ENCODE measurements at regions of chr6 and their contacts with region 1.

Region 1: DNA sequence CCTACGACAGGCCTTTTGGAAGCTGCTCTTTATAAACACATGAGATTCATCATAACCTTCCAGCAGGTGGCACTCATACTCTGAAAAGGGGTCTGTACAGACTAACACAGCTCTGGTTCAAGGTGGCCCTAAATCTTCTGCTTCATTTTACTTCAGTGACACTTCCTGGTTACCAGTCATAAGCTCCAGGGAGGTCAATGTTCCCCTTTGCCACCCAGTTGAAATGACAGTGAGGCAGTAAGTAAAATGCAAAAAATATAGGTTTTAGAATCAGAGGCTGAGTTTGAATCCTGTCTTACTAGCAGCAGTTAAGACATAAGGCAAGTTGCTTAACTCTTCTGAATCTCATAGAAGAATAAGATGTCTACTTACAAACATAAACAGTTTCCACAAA is 132.8 kb downstream of the CDK19 start:
- DNase-seq: peak in 1 of 2 donors; percentile 85
- ATAC-seq: peak; percentile 91 to 98 (median 96)
- H3K4me3 ChIP-seq: no peak overlapping the region
- H3K27ac ChIP-seq: peak overlapping the region in 5 of 10 donors; percentile 27 to 61 (median 57)
- H3K4me1 ChIP-seq: peaks cover 0 to 30% (median 17%) of the 10 kb centered on the region in 9 donors
- H3K27me3 ChIP-seq: no peaks in the 10 kb centered on the region
- CTCF ChIP-seq: peak; percentile 64 to 84 (median 78)

Region 2: GRCh38 chr6:110528101-110528929 is 154.1 kb before region 1 on chr6:
- intact Hi-C with region 1: loop called in 7 of 10 experiments (anchors 5 to 10 kb)
- DNase-seq: peak in 1 of 2 donors; percentile 51
- ATAC-seq: peak; percentile 48 to 89 (median 84)
- H3K4me3 ChIP-seq: no peak overlapping the region
- H3K27ac ChIP-seq: peak overlapping the region in 7 of 10 donors; percentile 8 to 52 (median 38)
- H3K4me1 ChIP-seq: peaks cover 0 to 19% (median 6%) of the 10 kb centered on the region in 9 donors
- H3K27me3 ChIP-seq: no peaks in the 10 kb centered on the region
- CTCF ChIP-seq: peak; percentile 72 to 88 (median 81)

Region 3: DNA sequence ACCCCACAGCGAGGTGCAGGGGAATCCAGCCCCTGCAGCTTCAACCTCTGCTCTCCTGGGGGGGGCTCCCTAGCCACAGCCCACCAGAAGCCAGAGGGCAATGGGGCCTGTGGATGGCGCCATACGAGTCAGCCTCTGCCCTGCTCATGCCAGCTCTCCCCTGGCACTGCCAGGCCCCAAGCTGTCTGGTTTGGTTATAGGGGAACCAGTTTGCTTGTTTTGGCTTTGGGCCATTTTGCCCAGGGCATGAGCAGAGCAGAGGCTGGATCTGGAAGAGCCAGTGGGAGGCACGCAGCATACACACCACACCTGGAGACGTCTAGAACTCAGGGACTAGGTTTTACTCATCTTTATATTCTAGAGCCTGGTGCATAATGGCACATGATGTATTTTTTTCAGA is 139.4 kb before region 1 on chr6:
- intact Hi-C with region 1: loop called in 3 of 10 experiments (anchors 5 to 10 kb)
- DNase-seq: peak in 1 of 2 donors; percentile 15
- ATAC-seq: peak; percentile 26 to 63 (median 44)
- H3K4me3 ChIP-seq: no peak overlapping the region
- H3K27ac ChIP-seq: peak overlapping the region; percentile 37 to 90 (median 88)
- H3K4me1 ChIP-seq: peaks cover 9 to 37% (median 20%) of the 10 kb centered on the region in 9 donors
- H3K27me3 ChIP-seq: no peaks in the 10 kb centered on the region
- CTCF ChIP-seq: no peak

Region 4: DNA sequence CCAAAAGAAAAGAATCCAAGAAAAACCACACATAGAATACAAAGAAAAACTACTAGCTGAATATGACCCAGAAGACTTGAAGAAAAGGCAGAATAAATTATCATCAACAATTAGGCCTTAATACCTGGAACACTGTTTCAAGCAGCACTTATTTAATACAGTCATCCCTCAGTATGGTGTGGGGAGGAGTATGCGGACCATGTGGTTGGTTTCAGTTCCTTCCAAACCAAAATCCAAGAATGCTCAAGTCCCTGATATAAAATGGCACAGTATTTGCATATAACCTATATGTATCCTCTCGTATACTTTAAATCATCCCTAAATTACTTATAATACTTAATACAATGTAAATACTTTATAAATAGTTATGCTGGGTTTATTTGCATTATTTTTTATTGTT is 116.7 kb after region 1 on chr6:
- intact Hi-C with region 1: no loop called
- DNase-seq: no peak
- ATAC-seq: no peak
- H3K4me3 ChIP-seq: no peak overlapping the region
- H3K27ac ChIP-seq: no peak overlapping the region
- H3K4me1 ChIP-seq: peaks cover 0 to 4% (median 0%) of the 10 kb centered on the region in 9 donors
- H3K27me3 ChIP-seq: no peaks in the 10 kb centered on the region
- CTCF ChIP-seq: no peak

Region 5: GRCh38 chr6:110873981-110874879 is 191.8 kb after region 1 on chr6 and contains the start of gene AMD1:
- intact Hi-C with region 1: loop called in 8 of 10 experiments (anchors 1 to 10 kb)
- DNase-seq: peak; percentile 97 to 99
- ATAC-seq: peak; percentile 89 to 97 (median 94)
- H3K4me3 ChIP-seq: peak within 1 kb of the TSS; percentile 68 to 96 (median 91)
- H3K27ac ChIP-seq: peak within 1 kb of the TSS; percentile 84 to 97 (median 95)
- H3K4me1 ChIP-seq: peaks cover 0 to 42% (median 30%) of the 10 kb centered on the region in 9 donors
- H3K27me3 ChIP-seq: no peaks in the 10 kb centered on the region
- CTCF ChIP-seq: no peak
- total RNA-seq, gene AMD1: 38.0 to 101 (median 55.3) TPM

Region 6: GRCh38 chr6:110949679-110950285 is 267.3 kb after region 1 on chr6:
- intact Hi-C with region 1: loop called (anchors 1 to 5 kb)
- DNase-seq: no peak
- ATAC-seq: peak in 1 of 8 donors; percentile 19
- H3K4me3 ChIP-seq: no peak overlapping the region
- H3K27ac ChIP-seq: no peak overlapping the region
- H3K4me1 ChIP-seq: peaks cover 0 to 10% (median 0%) of the 10 kb centered on the region in 9 donors
- H3K27me3 ChIP-seq: no peaks in the 10 kb centered on the region
- CTCF ChIP-seq: peak; percentile 19 to 70 (median 56)